Activated CD4-positive, alpha-beta T cell treated with anti-CD3 and anti-CD28 coated beads for 36 hours (primary cell): ENCODE measurements at regions of chr13 and their contacts with region 1.

Region 1: DNA sequence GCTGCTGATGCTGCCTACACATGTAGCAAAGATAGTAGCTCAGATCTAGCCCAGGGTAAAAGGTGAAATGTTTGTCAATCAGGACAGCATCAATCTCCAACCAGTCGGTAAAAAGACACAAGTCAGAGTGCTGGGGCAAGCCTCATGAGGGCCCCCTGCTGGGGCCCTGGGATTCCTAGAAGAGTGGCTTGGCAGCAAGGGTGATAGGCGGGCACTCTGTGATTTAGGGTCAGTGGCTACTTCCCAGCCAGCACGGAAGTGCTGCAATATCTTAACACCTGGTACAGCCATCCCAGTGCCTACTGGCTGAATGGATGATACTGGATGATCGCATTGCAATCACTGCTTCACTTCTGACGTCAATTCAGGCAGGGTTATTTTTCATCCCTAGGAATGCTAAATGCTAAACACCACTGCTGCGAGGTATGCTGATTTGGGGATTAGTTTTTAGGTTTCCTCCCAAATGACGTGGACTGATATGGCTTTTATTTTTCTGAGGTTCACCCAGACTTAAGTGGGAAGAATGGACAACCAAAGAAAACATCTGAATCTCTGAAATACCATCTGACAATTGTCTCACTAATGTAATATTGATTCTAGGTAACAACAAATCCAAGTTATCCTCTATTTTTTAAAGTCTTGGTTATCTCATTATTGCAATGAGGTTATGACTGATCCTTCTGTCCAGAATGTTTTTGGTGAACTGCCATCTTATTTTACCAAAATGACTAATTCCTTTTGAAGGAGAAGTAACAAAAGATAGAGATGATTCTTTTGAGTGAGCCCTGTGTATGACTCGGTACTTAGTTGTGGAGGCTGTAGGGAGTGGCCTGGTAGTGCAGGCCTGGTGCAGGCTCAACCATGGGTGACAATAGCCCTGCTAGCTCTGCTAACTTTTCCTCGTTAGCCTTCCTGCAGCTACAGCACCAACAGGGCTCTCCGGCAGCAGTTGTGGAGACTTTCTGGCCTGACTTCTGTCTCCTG is 432.5 kb downstream of the FGF9 start:
- DNase-seq: no peak
- ATAC-seq: peak; percentile 71
- H3K4me3 Mint-ChIP-seq: no peak overlapping the region
- H3K27ac Mint-ChIP-seq: no peak overlapping the region
- H3K4me1 Mint-ChIP-seq: peaks cover 26% of the 10 kb centered on the region
- H3K27me3 Mint-ChIP-seq: peaks cover 5% of the 10 kb centered on the region

Region 2: DNA sequence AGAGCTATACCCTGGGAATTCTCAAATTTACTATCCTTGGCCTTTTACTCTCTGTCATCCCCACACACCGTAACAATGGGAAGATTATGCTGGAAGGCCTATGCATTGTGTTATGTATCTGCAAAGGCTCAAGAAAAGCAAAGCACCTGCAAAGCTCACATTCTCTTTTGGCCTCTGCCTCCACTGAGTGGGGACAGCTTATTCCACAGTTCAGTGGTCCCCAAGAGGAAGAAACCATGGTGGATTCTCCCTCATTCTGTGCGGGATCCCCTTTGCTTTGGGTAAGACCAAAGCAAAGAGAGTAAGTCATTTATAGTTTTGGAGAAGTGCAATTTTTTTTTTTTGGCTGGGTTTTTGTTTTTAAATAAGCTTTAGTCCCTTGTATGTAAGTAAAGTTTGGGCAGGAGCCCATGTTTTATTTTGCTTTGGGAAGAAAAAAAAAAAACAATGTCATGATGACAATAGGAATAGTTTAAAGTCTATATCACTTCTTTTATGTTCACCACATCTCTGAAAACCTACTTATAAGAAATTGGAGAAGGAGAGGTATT is 98.1 kb after region 1 on chr13:
- CTCF ChIA-PET with region 1: no interaction called
- POLR2A ChIA-PET with region 1: interaction called, 14 read pairs
- intact Hi-C with region 1: no loop called
- DNase-seq: no peak
- ATAC-seq: no peak
- H3K4me3 Mint-ChIP-seq: no peak overlapping the region
- H3K27ac Mint-ChIP-seq: no peak overlapping the region
- H3K4me1 Mint-ChIP-seq: no peaks in the 10 kb centered on the region
- H3K27me3 Mint-ChIP-seq: no peaks in the 10 kb centered on the region

Region 3: DNA sequence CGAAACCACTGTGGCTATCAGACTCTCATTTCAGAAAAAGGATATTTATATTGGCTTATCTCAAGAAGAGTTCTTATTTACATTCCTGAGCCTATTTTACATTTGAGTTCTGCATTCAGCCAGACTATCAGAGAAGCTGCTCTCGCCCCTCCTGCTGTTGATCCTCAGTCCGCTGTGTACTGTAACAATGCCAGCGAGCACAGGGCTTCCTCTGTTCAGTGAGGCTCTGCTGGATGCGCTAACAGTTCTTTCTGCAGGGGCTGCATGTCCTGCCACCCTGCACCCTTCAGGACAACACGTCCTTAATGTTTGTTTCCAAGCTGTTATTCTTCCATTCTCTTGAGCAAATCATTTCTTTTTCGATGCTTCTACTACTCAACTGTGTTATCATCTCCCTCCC is 613.7 kb after region 1 on chr13:
- CTCF ChIA-PET with region 1: no interaction called
- POLR2A ChIA-PET with region 1: no interaction called
- intact Hi-C with region 1: no loop called
- DNase-seq: no peak
- ATAC-seq: no peak
- H3K4me3 Mint-ChIP-seq: no peak overlapping the region
- H3K27ac Mint-ChIP-seq: no peak overlapping the region
- H3K4me1 Mint-ChIP-seq: no peaks in the 10 kb centered on the region
- H3K27me3 Mint-ChIP-seq: no peaks in the 10 kb centered on the region